ENCODE measurements at regions of chr6 and their contacts with region 1.

Region 1: GRCh38 chr6:145633981-145634627 is 101.2 kb downstream of the EPM2A start:
- DNase-seq: peak; percentile 85

Region 2: GRCh38 chr6:145214570-145214969 is 419.5 kb before region 1 on chr6:
- intact Hi-C with region 1: loop called (anchors 10 kb)
- DNase-seq: no peak